ENCODE measurements at regions of chr10 and their contacts with region 1.

Region 1: DNA sequence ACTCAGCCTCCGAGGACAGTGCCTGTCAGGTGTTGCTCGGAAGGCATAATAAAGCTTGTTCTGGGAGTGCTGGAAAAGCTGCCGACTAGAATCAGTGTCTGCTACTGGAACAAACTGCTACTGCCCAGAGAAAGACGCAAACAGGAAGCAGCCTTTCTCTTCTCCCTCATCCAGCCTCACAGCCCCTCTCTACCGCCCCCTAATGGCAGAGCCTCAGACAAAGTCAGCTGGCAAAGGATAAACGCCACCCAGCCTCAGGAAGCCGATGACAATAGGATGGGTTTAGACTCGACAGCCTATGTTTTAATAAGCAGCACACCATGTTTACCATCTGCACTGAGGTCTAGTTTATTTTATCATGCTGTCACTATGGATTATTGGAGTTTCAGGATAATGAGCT is 169.5 kb upstream of the LYZL1 start:
- DNase-seq: no peak
- H3K4me3 ChIP-seq: no peak overlapping the region
- H3K27ac ChIP-seq: no peak overlapping the region
- H3K27me3 ChIP-seq: no peaks in the 10 kb centered on the region
- CTCF ChIP-seq: peak; percentile 50

Region 2: DNA sequence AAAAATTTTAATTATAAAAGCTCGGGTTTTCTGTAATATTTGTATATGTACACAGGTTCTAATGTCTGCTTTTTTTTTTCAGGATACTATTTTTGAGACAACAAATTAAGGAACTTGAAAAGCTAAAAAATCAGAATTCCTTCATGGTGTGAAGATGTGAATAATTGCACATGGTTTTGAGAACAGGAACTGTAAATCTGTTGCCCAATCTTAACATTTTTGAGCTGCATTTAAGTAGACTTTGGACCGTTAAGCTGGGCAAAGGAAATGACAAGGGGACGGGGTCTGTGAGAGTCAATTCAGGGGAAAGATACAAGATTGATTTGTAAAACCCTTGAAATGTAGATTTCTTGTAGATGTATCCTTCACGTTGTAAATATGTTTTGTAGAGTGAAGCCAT is 499.9 kb before region 1 on chr10:
- CTCF ChIA-PET with region 1: interaction called, 10 read pairs
- POLR2A ChIA-PET with region 1: no interaction called
- DNase-seq: no peak
- H3K4me3 ChIP-seq: no peak overlapping the region
- H3K27ac ChIP-seq: no peak overlapping the region
- H3K27me3 ChIP-seq: no peaks in the 10 kb centered on the region
- CTCF ChIP-seq: no peak

Region 3: DNA sequence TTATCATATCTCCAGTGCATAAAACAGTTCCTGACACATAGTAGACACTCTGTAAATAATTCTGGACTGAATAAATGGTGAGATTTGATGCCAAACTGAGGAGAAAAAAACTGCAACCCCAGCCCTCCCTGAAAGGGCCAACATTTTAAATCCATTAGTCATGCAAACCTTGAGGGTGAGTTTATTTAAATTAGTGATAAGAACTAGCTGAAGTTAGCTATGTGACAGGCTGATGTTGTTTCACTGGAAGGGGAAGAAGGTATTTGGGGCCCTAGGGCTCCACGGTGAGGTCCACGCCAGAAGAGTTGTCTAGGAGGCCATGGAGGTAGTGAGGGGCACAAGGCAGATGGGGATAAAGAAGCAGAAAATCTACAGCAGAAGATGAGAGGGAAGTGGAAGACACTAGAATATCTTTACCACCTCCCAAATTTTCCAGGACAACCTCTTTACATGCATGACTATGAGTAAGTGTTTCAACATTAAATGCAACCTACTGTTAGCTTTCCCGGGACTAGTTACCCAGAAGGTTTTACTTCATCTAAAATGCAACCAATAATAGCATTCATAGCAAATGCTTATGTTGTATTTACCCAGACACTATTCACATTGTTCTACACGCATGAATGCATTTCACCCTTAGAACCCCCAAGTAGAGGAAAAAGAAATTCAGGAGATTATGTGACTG is 13.7 kb before region 1 on chr10:
- CTCF ChIA-PET with region 1: interaction called, 11 read pairs
- POLR2A ChIA-PET with region 1: no interaction called
- DNase-seq: peak; percentile 37
- H3K4me3 ChIP-seq: no peak overlapping the region
- H3K27ac ChIP-seq: peak overlapping the region; percentile 22
- H3K27me3 ChIP-seq: peaks cover 8% of the 10 kb centered on the region
- CTCF ChIP-seq: no peak

Region 4: DNA sequence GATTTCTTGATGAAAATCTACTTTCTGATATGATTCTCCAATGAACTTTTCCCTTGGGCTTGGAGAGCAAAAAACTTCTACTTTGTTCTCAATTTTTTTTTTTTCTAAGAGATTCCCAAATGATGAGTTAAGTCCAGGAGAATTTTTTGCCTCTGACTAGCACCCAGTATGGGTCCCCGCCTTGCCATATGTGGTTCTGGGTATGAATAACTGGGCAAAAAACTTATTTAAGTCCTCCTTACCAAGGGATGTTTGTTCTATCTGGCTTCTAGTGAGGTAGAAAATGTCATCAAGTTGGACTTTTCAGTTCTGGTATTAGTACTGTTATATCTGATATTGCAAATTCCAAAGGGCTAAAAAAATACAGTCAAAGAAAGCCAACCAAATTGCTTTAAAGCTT is 21.7 kb after region 1 on chr10:
- CTCF ChIA-PET with region 1: no interaction called
- POLR2A ChIA-PET with region 1: no interaction called
- DNase-seq: peak; percentile 69
- H3K4me3 ChIP-seq: no peak overlapping the region
- H3K27ac ChIP-seq: peak overlapping the region; percentile 82
- H3K27me3 ChIP-seq: no peaks in the 10 kb centered on the region
- CTCF ChIP-seq: no peak